Right ventricle myocardium superior (tissue), 1 donor: ENCODE measurements at regions of chr1 and their contacts with region 1.

Region 1: DNA sequence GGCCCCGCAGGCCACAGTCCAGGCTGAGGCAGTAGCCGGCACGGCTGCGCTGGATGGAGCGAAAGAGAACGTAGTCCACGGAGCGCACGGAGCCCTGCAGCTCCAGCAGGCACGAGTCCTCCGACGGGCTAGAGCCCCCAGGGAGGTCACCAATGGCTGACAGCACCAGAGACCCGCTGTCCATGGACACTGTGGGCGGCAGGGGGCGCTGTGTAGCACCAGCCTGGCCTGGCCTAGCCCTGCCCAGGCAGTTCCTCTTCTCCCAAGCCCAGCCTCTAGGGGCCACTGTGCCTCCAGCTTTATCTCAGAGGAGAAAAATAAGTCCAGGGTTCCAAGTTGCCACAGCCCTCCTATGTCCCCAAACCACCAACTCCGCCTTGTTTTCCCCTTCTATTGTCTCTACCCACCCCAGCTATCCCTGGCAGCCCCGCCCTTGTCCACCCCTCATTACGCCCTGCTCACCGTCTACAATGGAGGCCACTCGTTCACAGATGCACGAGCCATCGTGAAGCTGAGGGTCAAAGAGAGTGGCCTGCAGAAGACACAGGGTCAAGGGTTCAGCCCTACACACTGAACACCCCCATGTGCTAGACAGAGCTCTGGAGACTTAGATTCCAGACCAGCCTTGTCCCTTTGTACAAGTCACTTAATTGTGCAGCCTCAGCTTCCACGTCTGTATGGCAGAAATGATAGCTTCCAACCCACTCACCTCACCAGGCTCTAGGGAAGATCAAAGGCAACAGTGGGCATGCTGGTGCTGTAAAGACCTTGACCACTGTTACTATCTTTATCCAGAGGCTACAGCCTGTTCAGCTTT is 4.4 kb downstream of the ENTREP3 start:
- DNase-seq: peak; percentile 96
- ATAC-seq: peak; percentile 87

Region 2: DNA sequence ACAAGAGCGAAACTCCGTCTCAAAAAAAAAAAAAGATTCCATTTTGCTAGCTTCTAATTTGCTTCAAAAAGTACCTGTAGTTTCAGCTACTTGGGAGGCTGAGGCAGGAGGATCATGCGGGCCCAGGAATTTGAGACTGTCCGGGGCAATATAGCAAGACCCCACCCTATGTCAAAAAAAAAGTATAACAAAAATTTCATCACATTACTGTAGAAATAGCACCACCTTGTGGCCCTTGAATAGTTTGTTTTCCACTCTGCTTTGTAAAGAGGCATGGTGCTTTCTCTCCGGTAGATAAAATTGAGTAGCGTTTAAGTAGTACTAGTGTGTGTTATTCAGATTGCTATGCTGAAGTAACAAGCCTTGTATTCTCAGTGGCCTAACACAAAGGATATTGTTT is 340.9 kb after region 1 on chr1:
- intact Hi-C with region 1: loop called (anchors 5 kb)
- DNase-seq: no peak
- ATAC-seq: peak; percentile 77